ENCODE measurements at regions of chr20 and their contacts with region 1.

Region 1: GRCh38 chr20:324177-325044 is 941 bp upstream of the SOX12 start:
- DNase-seq: peak; percentile 61 to 92 (median 81)
- ATAC-seq: peak; percentile 58 to 62 (median 61)
- H3K4me3 ChIP-seq: peak overlapping the region; percentile 73 to 84
- H3K4me3 Mint-ChIP-seq: peak overlapping the region; percentile 84 to 90 (median 87)
- H3K27ac ChIP-seq: peak overlapping the region; percentile 62
- H3K27ac Mint-ChIP-seq: peak overlapping the region; percentile 81 to 90
- H3K4me1 ChIP-seq: peaks cover 7 to 42% of the 10 kb centered on the region in 2 experiments
- H3K4me1 Mint-ChIP-seq: peaks cover 22 to 25% (median 24%) of the 10 kb centered on the region in 3 donors
- H3K27me3 ChIP-seq: no peaks in the 10 kb centered on the region
- H3K27me3 Mint-ChIP-seq: no peaks in the 10 kb centered on the region

Region 2: GRCh38 chr20:235891-236290 is 88.5 kb before region 1 on chr20:
- CTCF ChIA-PET with region 1: no interaction called
- POLR2A ChIA-PET with region 1: no interaction called
- DNase-seq: no peak
- ATAC-seq: no peak
- H3K4me3 ChIP-seq: no peak overlapping the region
- H3K4me3 Mint-ChIP-seq: no peak overlapping the region
- H3K27ac ChIP-seq: no peak overlapping the region
- H3K27ac Mint-ChIP-seq: no peak overlapping the region
- H3K4me1 ChIP-seq: peaks cover 8 to 17% of the 10 kb centered on the region in 2 experiments
- H3K4me1 Mint-ChIP-seq: peaks cover 22 to 27% (median 26%) of the 10 kb centered on the region in 3 donors
- H3K27me3 ChIP-seq: no peaks in the 10 kb centered on the region
- H3K27me3 Mint-ChIP-seq: peaks cover 0 to 2% of the 10 kb centered on the region in 2 donors

Region 3: DNA sequence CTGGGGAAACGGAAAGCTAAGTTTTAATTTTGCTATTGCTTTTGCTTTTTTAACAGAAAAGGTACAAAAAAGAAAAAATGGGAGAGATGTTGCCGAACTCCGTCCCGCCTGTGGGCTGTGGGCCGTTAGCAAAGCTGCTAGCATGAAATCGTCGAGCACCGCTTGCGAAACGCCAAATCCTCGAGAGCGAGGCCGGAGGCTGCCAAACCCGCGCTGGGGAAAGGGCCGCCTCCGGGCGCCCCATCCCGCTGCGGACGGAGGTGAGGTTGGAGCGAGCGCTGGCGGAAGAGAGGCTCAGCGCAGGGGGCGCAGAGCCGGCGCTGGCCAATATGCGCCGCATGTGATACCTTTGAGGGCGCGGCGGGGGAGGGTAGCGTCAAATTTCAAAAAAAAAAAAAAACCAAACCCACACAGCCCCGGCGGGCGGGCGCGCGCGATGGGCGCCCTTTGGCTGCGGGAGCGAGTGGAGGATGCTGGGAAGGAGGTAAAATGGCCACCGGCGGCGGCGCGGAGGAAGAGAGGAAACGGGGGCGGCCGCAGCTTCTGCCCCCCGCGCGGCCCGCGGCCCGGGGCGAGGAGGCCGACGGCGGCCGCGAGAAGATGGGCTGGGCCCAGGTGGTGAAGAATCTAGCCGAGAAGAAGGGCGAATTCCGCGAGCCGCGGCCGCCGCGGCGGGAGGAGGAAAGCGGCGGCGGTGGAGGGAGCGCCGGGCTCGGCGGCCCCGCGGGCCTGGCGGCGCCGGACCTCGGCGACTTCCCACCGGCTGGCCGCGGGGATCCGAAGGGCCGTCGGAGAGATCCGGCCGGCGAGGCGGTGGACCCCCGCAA is 27.1 kb before region 1 on chr20 and contains the start of gene ZCCHC3:
- CTCF ChIA-PET with region 1: interaction called in 1 of 2 experiments, 11 read pairs
- POLR2A ChIA-PET with region 1: interaction called, 4 to 5 read pairs
- DNase-seq: peak; percentile 66 to 90 (median 77)
- ATAC-seq: peak; percentile 80 to 90 (median 84)
- H3K4me3 ChIP-seq: peak within 1 kb of the TSS; percentile 81 to 97
- H3K4me3 Mint-ChIP-seq: peak within 1 kb of the TSS; percentile 99
- H3K27ac ChIP-seq: peak within 1 kb of the TSS; percentile 88
- H3K27ac Mint-ChIP-seq: peak within 1 kb of the TSS; percentile 99
- H3K4me1 ChIP-seq: peaks cover 16 to 24% of the 10 kb centered on the region in 2 experiments
- H3K4me1 Mint-ChIP-seq: peaks cover 40 to 58% (median 43%) of the 10 kb centered on the region in 3 donors
- H3K27me3 ChIP-seq: no peaks in the 10 kb centered on the region
- H3K27me3 Mint-ChIP-seq: no peaks in the 10 kb centered on the region
- total RNA-seq, gene ZCCHC3: 16.7 to 30.2 (median 27.3) TPM

Region 4: DNA sequence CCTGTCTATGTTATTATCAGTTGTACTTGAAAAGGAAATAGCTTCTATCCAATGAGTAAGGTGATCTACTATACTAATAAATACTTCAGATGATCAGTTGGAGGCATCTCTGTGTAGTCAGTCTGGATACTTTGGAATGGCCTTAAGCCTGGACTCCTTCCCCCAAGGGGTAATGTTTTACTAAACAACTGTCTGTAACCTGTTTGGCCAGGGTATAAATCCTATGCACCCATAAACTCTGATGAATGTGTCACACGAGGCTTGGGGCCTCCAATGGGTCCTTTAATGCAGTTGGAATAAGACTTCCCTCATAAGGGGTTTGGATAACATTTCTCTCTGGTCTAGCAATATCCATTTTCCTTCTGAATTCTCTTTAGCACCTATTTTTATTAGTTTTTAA is 463.4 kb after region 1 on chr20:
- CTCF ChIA-PET with region 1: no interaction called
- POLR2A ChIA-PET with region 1: no interaction called
- DNase-seq: no peak
- ATAC-seq: no peak
- H3K4me3 ChIP-seq: no peak overlapping the region
- H3K4me3 Mint-ChIP-seq: no peak overlapping the region
- H3K27ac ChIP-seq: no peak overlapping the region
- H3K27ac Mint-ChIP-seq: no peak overlapping the region
- H3K4me1 ChIP-seq: no peaks in the 10 kb centered on the region
- H3K4me1 Mint-ChIP-seq: no peaks in the 10 kb centered on the region
- H3K27me3 ChIP-seq: peaks cover 0 to 4% of the 10 kb centered on the region in 2 experiments
- H3K27me3 Mint-ChIP-seq: peaks cover 22 to 44% of the 10 kb centered on the region in 2 donors